Lower leg skin (tissue), 4 donors: ENCODE measurements at regions of chr18 and their contacts with region 1.

Region 1: DNA sequence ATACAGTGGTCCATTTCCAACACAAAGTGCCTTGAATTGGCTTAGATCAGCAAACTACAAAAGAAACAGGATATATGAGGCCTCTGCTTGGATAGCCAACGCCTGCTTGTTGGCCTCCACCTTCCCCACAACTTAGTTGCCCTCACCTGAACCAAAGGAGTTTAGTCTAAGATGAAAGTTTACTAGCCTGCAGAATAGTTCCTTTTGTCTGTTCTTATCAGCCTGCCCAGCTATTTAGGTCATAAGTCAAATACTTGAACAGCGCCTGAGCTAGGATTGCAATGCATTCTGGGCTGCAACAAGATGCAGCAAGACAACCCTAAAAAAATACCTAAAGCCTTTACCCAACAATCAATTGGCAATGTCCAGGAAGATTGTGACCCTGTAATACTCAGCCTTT is 13.1 kb upstream of the EPG5 start:
- DNase-seq: no peak
- H3K4me3 ChIP-seq: no peak overlapping the region
- CTCF ChIP-seq: no peak
- POLR2A ChIP-seq: no peak

Region 2: GRCh38 chr18:45589356-45590035 is 390.7 kb before region 1 on chr18:
- intact Hi-C with region 1: no loop called
- DNase-seq: no peak
- H3K4me3 ChIP-seq: no peak overlapping the region
- CTCF ChIP-seq: no peak
- POLR2A ChIP-seq: no peak

Region 3: GRCh38 chr18:45715341-45715740 is 264.9 kb before region 1 on chr18:
- intact Hi-C with region 1: loop called (anchors 10 kb)
- DNase-seq: no peak
- H3K4me3 ChIP-seq: no peak overlapping the region
- CTCF ChIP-seq: no peak
- POLR2A ChIP-seq: no peak

Region 4: GRCh38 chr18:46601141-46601805 is 621.0 kb after region 1 on chr18:
- intact Hi-C with region 1: no loop called
- DNase-seq: no peak
- H3K4me3 ChIP-seq: no peak overlapping the region
- CTCF ChIP-seq: no peak
- POLR2A ChIP-seq: no peak